K562 (cell line): ENCODE measurements at regions of chr18 and their contacts with region 1.

Region 1: DNA sequence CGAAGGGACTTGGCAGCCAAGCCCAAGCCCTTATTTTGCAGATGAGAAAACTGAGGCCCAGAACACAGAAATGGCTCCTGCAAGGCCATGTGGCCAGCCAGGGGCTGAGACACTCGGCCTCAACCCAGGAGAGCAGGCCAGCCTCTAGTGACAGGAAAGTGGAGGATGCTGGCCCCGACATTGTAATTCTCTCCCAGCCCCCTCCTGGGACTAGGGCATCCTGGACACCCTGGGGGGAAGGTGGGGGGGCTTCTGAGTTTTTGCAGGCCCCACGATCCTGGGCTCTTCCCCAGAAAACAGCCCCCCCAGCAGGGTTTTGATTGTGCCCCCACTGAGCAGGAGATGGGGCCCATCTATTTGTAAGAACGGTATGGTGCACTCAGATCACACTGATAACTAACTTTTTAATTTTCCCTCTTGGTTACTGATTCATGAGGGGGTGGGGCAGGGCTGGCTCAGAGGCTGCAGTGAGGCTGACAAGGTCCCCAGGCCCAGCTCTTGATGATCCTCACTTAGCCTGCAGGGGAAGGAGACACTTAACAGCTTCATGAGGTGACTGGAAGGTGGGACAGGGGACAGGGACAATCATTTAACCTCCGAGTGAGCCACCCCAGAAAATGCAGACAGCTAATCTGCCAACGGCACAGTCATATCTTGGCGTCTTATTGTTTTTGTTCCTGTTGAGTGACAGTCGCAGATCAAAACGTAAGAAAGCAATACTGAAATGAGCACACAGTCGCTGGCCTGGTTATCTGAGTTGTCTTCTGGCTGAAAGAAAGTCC is 18.9 kb downstream of the SMAD7 start:
- DNase-seq: peak in 3 of 4 experiments; percentile 34 to 49 (median 44)
- ATAC-seq: peak; percentile 53
- H3K4me3 ChIP-seq: no peak overlapping the region
- H3K27ac ChIP-seq: peak overlapping the region; percentile 37
- H3K4me1 ChIP-seq: peaks cover 36 to 63% of the 10 kb centered on the region in 2 experiments
- H3K27me3 ChIP-seq: no peaks in the 10 kb centered on the region
- CTCF ChIP-seq: no peak
- EP300 ChIP-seq: no peak
- POLR2A ChIP-seq: no peak
- RAD21 ChIP-seq: no peak

Region 2: GRCh38 chr18:47717257-47717656 is 1214.6 kb before region 1 on chr18:
- CTCF ChIA-PET with region 1: no interaction called
- POLR2A ChIA-PET with region 1: no interaction called
- in situ Hi-C with region 1: no loop called
- intact Hi-C with region 1: no loop called
- DNase-seq: no peak
- ATAC-seq: no peak
- H3K4me3 ChIP-seq: no peak overlapping the region
- H3K27ac ChIP-seq: no peak overlapping the region
- H3K4me1 ChIP-seq: no peaks in the 10 kb centered on the region
- H3K27me3 ChIP-seq: no peaks in the 10 kb centered on the region
- CTCF ChIP-seq: no peak
- EP300 ChIP-seq: no peak
- POLR2A ChIP-seq: no peak
- RAD21 ChIP-seq: no peak

Region 3: DNA sequence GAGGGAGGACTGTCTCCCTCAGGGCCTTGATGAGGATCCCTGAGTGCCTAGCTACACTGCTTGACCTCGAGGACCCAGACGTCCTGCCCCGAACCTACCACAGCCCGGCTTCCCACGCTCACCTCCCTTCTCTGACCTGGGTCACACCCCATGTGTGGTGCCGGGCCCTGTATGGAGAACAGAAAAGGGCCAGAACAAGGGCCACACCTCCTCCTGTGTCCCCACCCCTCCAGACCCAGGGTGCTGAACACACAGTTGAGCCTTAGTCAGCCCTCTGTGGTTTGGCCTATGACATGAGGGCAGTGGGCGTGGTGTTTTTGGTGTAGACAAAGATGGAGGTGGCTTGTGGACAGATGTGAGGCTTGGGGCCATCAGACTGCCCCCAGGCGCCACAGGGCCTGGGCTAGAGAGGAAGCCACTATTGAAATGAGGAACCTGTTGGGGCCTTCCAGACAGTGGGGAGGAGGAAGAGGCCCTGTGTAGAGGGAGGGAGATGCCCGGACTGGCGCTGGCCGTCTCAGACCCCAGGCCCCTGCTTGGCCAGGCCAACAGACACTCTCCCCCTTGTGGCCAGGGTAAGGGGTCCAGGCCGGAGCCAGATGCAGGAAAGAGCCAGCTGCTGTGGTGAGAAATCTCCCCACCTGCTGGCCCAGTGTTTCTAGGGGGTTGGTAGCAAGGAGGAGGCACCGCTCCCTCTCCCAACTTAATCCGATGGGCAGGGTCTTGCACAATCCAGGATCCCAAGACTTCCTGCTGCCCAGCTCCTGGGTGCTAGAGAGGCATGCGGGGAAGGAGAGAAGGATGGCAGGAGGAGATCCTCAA is 35.0 kb before region 1 on chr18:
- CTCF ChIA-PET with region 1: no interaction called
- POLR2A ChIA-PET with region 1: interaction called, 4 read pairs
- in situ Hi-C with region 1: no loop called
- intact Hi-C with region 1: loop called (anchors 2 kb)
- DNase-seq: peak; percentile 85 to 95 (median 88)
- ATAC-seq: peak; percentile 99
- H3K4me3 ChIP-seq: no peak overlapping the region
- H3K27ac ChIP-seq: peak overlapping the region; percentile 54; the same call in 2 of the 3 replicates
- H3K4me1 ChIP-seq: peaks cover 16 to 33% of the 10 kb centered on the region in 2 experiments
- H3K27me3 ChIP-seq: no peaks in the 10 kb centered on the region
- CTCF ChIP-seq: peak; percentile 51 to 76 (median 63)
- EP300 ChIP-seq: peak; percentile 51
- POLR2A ChIP-seq: no peak
- RAD21 ChIP-seq: peak; percentile 64 to 70